ENCODE measurements at regions of chr2 and their contacts with region 1.

Region 1: DNA sequence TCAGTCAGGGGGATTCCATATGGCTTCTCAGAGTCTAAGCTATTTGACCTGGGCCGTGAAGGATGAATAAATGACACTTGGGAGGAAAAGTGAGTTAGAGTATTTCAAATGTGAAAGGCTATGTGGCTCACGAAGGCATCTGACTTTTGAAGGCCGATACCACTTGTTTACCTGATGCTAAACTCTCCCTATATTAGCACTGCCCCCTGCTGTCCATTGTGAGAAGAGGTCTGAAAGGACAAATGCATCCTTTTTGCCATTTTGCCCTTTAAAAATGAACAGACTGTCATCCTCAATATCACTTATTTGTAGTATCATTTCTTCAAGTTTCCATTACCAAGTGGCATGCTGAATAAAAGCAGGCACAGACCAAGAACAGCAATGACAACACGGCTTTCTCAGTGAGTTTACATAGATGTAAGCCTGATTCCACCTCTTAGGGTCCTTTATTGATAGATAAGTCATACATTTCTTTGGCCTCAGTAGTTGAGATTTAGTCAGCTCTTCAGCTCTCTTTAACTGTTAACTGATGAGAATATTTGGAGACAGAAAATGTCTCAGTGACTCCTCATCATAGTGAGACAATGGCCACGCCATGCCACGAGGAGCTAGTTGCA is 40.1 kb downstream of the DOCK10 start:
- DNase-seq: peak; percentile 83
- ATAC-seq: peak; percentile 68
- H3K4me3 ChIP-seq: no peak overlapping the region
- H3K4me3 Mint-ChIP-seq: peak overlapping the region; percentile 53
- H3K27ac ChIP-seq: peak overlapping the region; percentile 22 to 51
- H3K27ac Mint-ChIP-seq: peak overlapping the region; percentile 90
- H3K4me1 ChIP-seq: peaks cover 19% of the 10 kb centered on the region in 2 donors
- H3K4me1 Mint-ChIP-seq: peaks cover 25% of the 10 kb centered on the region
- H3K27me3 ChIP-seq: no peaks in the 10 kb centered on the region
- H3K27me3 Mint-ChIP-seq: no peaks in the 10 kb centered on the region
- CTCF ChIP-seq: peak; percentile 80

Region 2: GRCh38 chr2:224869601-224870233 is 132.4 kb before region 1 on chr2:
- CTCF ChIA-PET with region 1: interaction called, 10 read pairs
- POLR2A ChIA-PET with region 1: no interaction called
- intact Hi-C with region 1: no loop called
- DNase-seq: no peak
- ATAC-seq: no peak
- H3K4me3 ChIP-seq: no peak overlapping the region
- H3K4me3 Mint-ChIP-seq: no peak overlapping the region
- H3K27ac ChIP-seq: no peak overlapping the region
- H3K27ac Mint-ChIP-seq: no peak overlapping the region
- H3K4me1 ChIP-seq: peaks cover 3% of the 10 kb centered on the region in 2 donors
- H3K4me1 Mint-ChIP-seq: peaks cover 5% of the 10 kb centered on the region
- H3K27me3 ChIP-seq: no peaks in the 10 kb centered on the region
- H3K27me3 Mint-ChIP-seq: no peaks in the 10 kb centered on the region
- CTCF ChIP-seq: no peak

Region 3: GRCh38 chr2:224927646-224928173 is 74.4 kb before region 1 on chr2:
- CTCF ChIA-PET with region 1: interaction called, 124 read pairs
- POLR2A ChIA-PET with region 1: interaction called, 4 read pairs
- intact Hi-C with region 1: loop called (anchors 1 kb)
- DNase-seq: no peak
- ATAC-seq: no peak
- H3K4me3 ChIP-seq: no peak overlapping the region
- H3K4me3 Mint-ChIP-seq: peak overlapping the region; percentile 4
- H3K27ac ChIP-seq: peak overlapping the region; percentile 38 to 43
- H3K27ac Mint-ChIP-seq: peak overlapping the region; percentile 78
- H3K4me1 ChIP-seq: peaks cover 86 to 87% of the 10 kb centered on the region in 2 donors
- H3K4me1 Mint-ChIP-seq: peaks cover 94% of the 10 kb centered on the region
- H3K27me3 ChIP-seq: no peaks in the 10 kb centered on the region
- H3K27me3 Mint-ChIP-seq: no peaks in the 10 kb centered on the region
- CTCF ChIP-seq: no peak

Region 4: GRCh38 chr2:224958462-224958857 is 43.7 kb before region 1 on chr2:
- CTCF ChIA-PET with region 1: interaction called, 21 read pairs
- POLR2A ChIA-PET with region 1: interaction called, 4 read pairs
- intact Hi-C with region 1: loop called (anchors 2 kb)
- DNase-seq: no peak
- ATAC-seq: no peak
- H3K4me3 ChIP-seq: peak overlapping the region in 1 of 5 experiments; percentile 59
- H3K4me3 Mint-ChIP-seq: peak overlapping the region; percentile 81
- H3K27ac ChIP-seq: peak overlapping the region; percentile 86 to 94
- H3K27ac Mint-ChIP-seq: peak overlapping the region; percentile 93
- H3K4me1 ChIP-seq: peaks cover 47 to 56% of the 10 kb centered on the region in 2 donors
- H3K4me1 Mint-ChIP-seq: peaks cover 76% of the 10 kb centered on the region
- H3K27me3 ChIP-seq: no peaks in the 10 kb centered on the region
- H3K27me3 Mint-ChIP-seq: no peaks in the 10 kb centered on the region
- CTCF ChIP-seq: no peak

Region 5: GRCh38 chr2:225013425-225014365 is 11.5 kb after region 1 on chr2:
- CTCF ChIA-PET with region 1: interaction called, 13 read pairs
- POLR2A ChIA-PET with region 1: no interaction called
- intact Hi-C with region 1: no loop called
- DNase-seq: no peak
- ATAC-seq: no peak
- H3K4me3 ChIP-seq: no peak overlapping the region
- H3K4me3 Mint-ChIP-seq: no peak overlapping the region
- H3K27ac ChIP-seq: no peak overlapping the region
- H3K27ac Mint-ChIP-seq: no peak overlapping the region
- H3K4me1 ChIP-seq: peaks cover 2 to 3% of the 10 kb centered on the region in 2 donors
- H3K4me1 Mint-ChIP-seq: peaks cover 21% of the 10 kb centered on the region
- H3K27me3 ChIP-seq: no peaks in the 10 kb centered on the region
- H3K27me3 Mint-ChIP-seq: no peaks in the 10 kb centered on the region
- CTCF ChIP-seq: no peak